ENCODE measurements at regions of chr12 and their contacts with region 1.

Region 1: GRCh38 chr12:108939594-108939993 is 59.7 kb downstream of the DAO start:
- DNase-seq: no peak
- ATAC-seq: peak; percentile 99
- H3K4me3 Mint-ChIP-seq: no peak overlapping the region
- H3K27ac Mint-ChIP-seq: no peak overlapping the region
- H3K4me1 Mint-ChIP-seq: no peaks in the 10 kb centered on the region
- H3K27me3 Mint-ChIP-seq: 0 out of 2 replicates have a peak, but pooled peaks cover 2% of the 10 kb centered on the region
- CTCF ChIP-seq: no peak

Region 2: DNA sequence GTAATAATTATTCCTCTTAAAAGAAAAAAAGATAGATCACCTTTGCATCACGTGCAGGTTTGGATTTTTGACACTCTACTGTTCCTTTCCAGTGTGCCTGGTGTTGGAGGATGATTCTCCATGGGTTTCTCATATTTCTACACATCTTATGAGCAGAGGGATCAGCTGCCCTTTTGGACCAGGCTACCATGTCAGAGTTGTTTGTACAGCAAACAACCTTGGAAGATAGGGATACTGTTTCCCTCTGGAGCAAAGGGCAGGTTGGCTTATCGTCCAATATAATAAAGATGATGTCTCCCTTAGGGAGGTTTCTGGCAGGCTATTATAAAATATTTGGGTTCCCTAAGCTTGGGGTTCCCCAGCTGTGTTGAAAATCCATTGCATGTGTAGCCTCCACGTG is 17.6 kb before region 1 on chr12:
- CTCF ChIA-PET with region 1: no interaction called
- POLR2A ChIA-PET with region 1: no interaction called
- DNase-seq: no peak
- ATAC-seq: no peak
- H3K4me3 Mint-ChIP-seq: no peak overlapping the region
- H3K27ac Mint-ChIP-seq: no peak overlapping the region
- H3K4me1 Mint-ChIP-seq: peaks cover 2% of the 10 kb centered on the region
- H3K27me3 Mint-ChIP-seq: peaks cover 4% of the 10 kb centered on the region
- CTCF ChIP-seq: no peak

Region 3: GRCh38 chr12:108950991-108951739 is 11.6 kb after region 1 on chr12:
- CTCF ChIA-PET with region 1: interaction called, 11 read pairs
- POLR2A ChIA-PET with region 1: interaction called, 3 read pairs
- DNase-seq: peak; percentile 74
- ATAC-seq: peak; percentile 92
- H3K4me3 Mint-ChIP-seq: no peak overlapping the region
- H3K27ac Mint-ChIP-seq: no peak overlapping the region
- H3K4me1 Mint-ChIP-seq: 0 out of 2 replicates have a peak, but pooled peaks cover 2% of the 10 kb centered on the region
- H3K27me3 Mint-ChIP-seq: peaks cover 2% of the 10 kb centered on the region; the same call in 1 of the 2 replicates
- CTCF ChIP-seq: peak; percentile 90

Region 4: GRCh38 chr12:108980831-108981618 is 41.4 kb after region 1 on chr12:
- CTCF ChIA-PET with region 1: no interaction called
- POLR2A ChIA-PET with region 1: no interaction called
- DNase-seq: no peak
- ATAC-seq: peak; percentile 83
- H3K4me3 Mint-ChIP-seq: no peak overlapping the region
- H3K27ac Mint-ChIP-seq: no peak overlapping the region
- H3K4me1 Mint-ChIP-seq: no peaks in the 10 kb centered on the region
- H3K27me3 Mint-ChIP-seq: peaks cover 5% of the 10 kb centered on the region
- CTCF ChIP-seq: no peak

Measured in WTC11 (cell line).